ENCODE measurements at regions of chr10 and their contacts with region 1.

Region 1: DNA sequence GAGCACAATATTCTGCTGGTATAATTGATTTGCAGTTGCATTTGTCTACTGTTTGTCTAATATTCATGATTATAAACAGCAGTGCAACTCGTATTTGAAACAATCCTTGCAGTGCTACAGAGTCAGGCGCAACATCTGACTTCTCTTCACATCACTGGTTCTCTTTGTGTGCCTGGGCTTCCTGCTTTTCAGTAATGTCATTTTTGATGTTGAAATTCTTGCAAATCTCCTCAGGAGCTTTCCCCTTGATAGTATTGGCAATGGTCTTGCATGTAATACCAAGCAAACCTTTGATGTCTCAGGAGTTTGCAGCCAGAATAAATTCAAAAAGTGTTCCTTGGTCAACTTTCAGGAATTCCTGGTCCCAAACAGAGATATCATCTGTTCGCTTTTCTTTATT is 20.2 kb downstream of the HPS6 start:
- DNase-seq: no peak
- H3K4me3 ChIP-seq: no peak overlapping the region
- H3K27me3 ChIP-seq: no peaks in the 10 kb centered on the region
- CTCF ChIP-seq: no peak

Region 2: DNA sequence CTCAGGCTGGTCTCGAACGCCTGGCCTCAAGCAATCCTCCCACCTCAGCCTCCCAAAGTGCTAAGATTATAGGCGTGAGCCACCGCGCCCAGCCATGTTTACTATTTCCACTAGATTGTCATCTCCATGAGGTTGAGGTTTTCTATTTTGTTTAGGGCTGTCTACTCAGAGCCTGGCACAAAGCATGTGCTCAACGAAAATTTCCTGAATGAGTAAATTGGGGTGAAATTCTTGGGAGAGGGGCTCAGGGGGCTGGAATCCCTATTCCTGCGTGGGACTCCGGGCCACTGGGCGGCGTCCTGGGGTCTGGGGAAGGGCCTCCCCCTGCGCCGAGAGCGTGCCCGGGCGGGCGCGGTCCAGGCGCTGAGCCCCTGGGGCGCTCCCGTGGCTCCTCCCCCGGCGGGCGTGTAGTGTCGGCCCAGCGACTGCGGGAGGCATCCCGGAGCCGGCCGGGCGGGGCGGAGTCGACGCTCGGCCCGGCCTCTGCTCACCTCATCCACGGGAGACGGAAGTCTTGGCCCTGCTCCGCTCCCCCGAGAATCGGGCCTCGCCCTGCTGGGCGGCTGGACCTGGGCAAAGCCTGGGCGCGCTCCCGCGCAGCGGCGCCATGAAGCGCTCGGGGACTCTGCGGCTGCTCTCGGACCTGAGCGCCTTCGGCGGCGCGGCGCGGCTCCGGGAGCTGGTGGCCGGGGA is 20.3 kb before region 1 on chr10 and contains the start of gene HPS6:
- CTCF ChIA-PET with region 1: interaction called, 11 read pairs
- POLR2A ChIA-PET with region 1: no interaction called
- DNase-seq: peak; percentile 74
- H3K4me3 ChIP-seq: peak within 1 kb of the TSS; percentile 76
- H3K27me3 ChIP-seq: no peaks in the 10 kb centered on the region
- CTCF ChIP-seq: peak; percentile 29
- polyA plus RNA-seq, gene HPS6: 8.3 and 11.8 TPM in 2 replicates

Region 3: GRCh38 chr10:103153302-103154197 is 1068.2 kb after region 1 on chr10:
- CTCF ChIA-PET with region 1: no interaction called
- POLR2A ChIA-PET with region 1: no interaction called
- DNase-seq: no peak
- H3K4me3 ChIP-seq: peak overlapping the region; percentile 16; the same call in 1 of the 2 replicates
- H3K27me3 ChIP-seq: no peaks in the 10 kb centered on the region
- CTCF ChIP-seq: no peak

Measured in BJ (cell line).